ENCODE measurements at regions of chr11 and their contacts with region 1.

Region 1: GRCh38 chr11:67082035-67082791 is 25.6 kb downstream of the RHOD start:
- DNase-seq: no peak
- H3K4me3 ChIP-seq: no peak overlapping the region
- H3K4me3 Mint-ChIP-seq: no peak overlapping the region
- H3K27ac Mint-ChIP-seq: no peak overlapping the region
- H3K4me1 ChIP-seq: peaks cover 25% of the 10 kb centered on the region
- H3K4me1 Mint-ChIP-seq: peaks cover 21% of the 10 kb centered on the region
- H3K27me3 ChIP-seq: no peaks in the 10 kb centered on the region
- H3K27me3 Mint-ChIP-seq: no peaks in the 10 kb centered on the region
- CTCF ChIP-seq: peak in 1 of 2 experiments; percentile 13

Region 2: GRCh38 chr11:66950113-66950535 is 132.1 kb before region 1 on chr11:
- CTCF ChIA-PET with region 1: no interaction called
- POLR2A ChIA-PET with region 1: no interaction called
- intact Hi-C with region 1: no loop called
- DNase-seq: peak; percentile 94 to 96
- H3K4me3 ChIP-seq: no peak overlapping the region
- H3K4me3 Mint-ChIP-seq: no peak overlapping the region
- H3K27ac Mint-ChIP-seq: peak overlapping the region; percentile 89
- H3K4me1 ChIP-seq: peaks cover 16% of the 10 kb centered on the region
- H3K4me1 Mint-ChIP-seq: peaks cover 17% of the 10 kb centered on the region
- H3K27me3 ChIP-seq: no peaks in the 10 kb centered on the region
- H3K27me3 Mint-ChIP-seq: no peaks in the 10 kb centered on the region
- CTCF ChIP-seq: no peak

Region 3: GRCh38 chr11:67099831-67100324 is 17.7 kb after region 1 on chr11:
- CTCF ChIA-PET with region 1: interaction called, 14 read pairs
- POLR2A ChIA-PET with region 1: no interaction called
- intact Hi-C with region 1: no loop called
- DNase-seq: no peak
- H3K4me3 ChIP-seq: no peak overlapping the region
- H3K4me3 Mint-ChIP-seq: no peak overlapping the region
- H3K27ac Mint-ChIP-seq: no peak overlapping the region
- H3K4me1 ChIP-seq: no peaks in the 10 kb centered on the region; the same call in 1 of the 2 replicates
- H3K4me1 Mint-ChIP-seq: no peaks in the 10 kb centered on the region
- H3K27me3 ChIP-seq: no peaks in the 10 kb centered on the region
- H3K27me3 Mint-ChIP-seq: no peaks in the 10 kb centered on the region
- CTCF ChIP-seq: no peak

Region 4: DNA sequence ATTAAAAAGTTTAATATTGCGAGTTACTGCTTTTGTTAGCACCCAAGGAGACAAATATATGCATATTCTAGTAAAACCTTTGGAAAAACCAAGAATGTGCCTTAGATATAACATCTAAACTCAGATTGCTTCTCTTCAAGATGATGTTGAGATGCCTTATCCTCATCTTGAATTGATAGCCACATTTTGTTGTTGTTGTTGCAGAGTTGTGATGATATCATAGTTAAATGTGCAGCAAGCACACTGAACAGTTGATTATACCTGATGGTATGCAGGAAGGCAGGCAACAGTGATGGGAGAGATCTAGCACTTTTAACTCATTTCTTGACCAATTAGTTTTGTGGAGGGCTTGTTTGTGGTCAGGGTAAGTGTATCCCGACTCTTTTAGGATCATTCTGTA is 84.9 kb after region 1 on chr11:
- CTCF ChIA-PET with region 1: interaction called, 4 read pairs
- POLR2A ChIA-PET with region 1: no interaction called
- intact Hi-C with region 1: loop called (anchors 2 kb)
- DNase-seq: no peak
- H3K4me3 ChIP-seq: no peak overlapping the region
- H3K4me3 Mint-ChIP-seq: no peak overlapping the region
- H3K27ac Mint-ChIP-seq: no peak overlapping the region
- H3K4me1 ChIP-seq: no peaks in the 10 kb centered on the region
- H3K4me1 Mint-ChIP-seq: no peaks in the 10 kb centered on the region
- H3K27me3 ChIP-seq: no peaks in the 10 kb centered on the region
- H3K27me3 Mint-ChIP-seq: no peaks in the 10 kb centered on the region
- CTCF ChIP-seq: no peak

Measured in Caco-2 (cell line).